Motor neuron (in vitro differentiated cells): ENCODE measurements at regions of chr5 and their contacts with region 1.

Region 1: DNA sequence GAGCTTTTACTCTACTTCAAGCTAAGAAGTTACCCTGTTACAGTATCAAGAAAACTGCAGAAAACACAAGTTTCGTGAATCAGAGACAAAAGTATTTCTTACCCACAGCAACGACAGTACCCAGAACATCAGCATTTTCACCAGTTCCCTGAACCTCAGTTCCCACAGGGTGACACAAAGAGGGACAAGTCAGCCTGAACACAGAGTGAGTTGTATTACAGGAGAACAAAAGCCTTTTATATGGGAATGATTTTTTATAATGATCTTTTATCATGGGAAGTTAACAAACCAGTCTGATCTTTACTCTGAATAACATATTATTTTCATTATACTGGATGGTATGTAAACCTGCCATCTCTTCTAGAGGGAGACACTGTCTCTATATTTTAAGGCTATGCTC is 139.0 kb upstream of the ITGA1 start:
- ATAC-seq: no peak
- H3K4me3 ChIP-seq: no peak overlapping the region
- H3K27ac ChIP-seq: no peak overlapping the region
- H3K4me1 ChIP-seq: no peaks in the 10 kb centered on the region

Region 2: DNA sequence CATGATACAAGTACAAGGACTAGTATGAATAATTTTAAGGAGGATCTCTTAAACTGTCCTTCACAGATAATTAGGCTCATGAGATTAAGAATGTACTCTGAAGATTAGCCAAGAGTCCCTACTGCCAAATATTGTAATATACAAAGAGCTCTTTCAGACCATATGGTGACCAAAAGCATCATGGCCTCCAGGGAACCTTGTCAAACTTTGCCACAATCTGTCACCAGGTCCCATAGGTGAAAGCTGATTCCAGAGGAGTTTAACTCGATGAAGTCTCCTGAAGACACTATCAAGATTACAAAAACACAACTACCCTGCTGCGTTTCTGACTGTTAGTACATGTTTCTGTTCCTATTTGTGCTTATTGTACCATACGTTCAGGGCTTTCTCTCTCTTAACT is 256.4 kb before region 1 on chr5:
- in situ Hi-C with region 1: loop called in 1 of 9 experiments (anchors 25 kb)
- ATAC-seq: peak in 1 of 8 experiments; percentile 64
- H3K4me3 ChIP-seq: no peak overlapping the region
- H3K27ac ChIP-seq: no peak overlapping the region
- H3K4me1 ChIP-seq: peaks cover 0 to 4% of the 10 kb centered on the region in 2 donors

Region 3: DNA sequence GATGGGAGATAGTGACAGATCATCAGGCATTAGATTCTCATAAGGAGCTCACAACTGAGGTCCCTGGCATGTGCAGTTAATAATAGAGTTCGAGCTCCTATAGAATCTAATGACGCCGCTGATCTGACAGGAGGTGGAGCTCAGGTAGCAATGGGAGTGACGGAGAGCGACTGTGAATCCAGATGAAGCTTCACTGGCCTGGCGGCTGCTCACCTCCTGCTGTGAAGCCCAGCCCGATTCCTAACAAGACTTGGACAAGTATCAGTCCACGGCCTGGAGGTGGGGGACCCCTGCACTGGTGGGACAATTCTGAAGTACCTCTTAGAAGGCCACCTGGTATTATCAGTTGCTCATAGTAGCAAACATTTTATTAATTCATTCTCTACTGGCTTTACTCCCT is 238.9 kb before region 1 on chr5:
- in situ Hi-C with region 1: no loop called
- ATAC-seq: no peak
- H3K4me3 ChIP-seq: no peak overlapping the region
- H3K27ac ChIP-seq: no peak overlapping the region
- H3K4me1 ChIP-seq: no peaks in the 10 kb centered on the region

Region 4: DNA sequence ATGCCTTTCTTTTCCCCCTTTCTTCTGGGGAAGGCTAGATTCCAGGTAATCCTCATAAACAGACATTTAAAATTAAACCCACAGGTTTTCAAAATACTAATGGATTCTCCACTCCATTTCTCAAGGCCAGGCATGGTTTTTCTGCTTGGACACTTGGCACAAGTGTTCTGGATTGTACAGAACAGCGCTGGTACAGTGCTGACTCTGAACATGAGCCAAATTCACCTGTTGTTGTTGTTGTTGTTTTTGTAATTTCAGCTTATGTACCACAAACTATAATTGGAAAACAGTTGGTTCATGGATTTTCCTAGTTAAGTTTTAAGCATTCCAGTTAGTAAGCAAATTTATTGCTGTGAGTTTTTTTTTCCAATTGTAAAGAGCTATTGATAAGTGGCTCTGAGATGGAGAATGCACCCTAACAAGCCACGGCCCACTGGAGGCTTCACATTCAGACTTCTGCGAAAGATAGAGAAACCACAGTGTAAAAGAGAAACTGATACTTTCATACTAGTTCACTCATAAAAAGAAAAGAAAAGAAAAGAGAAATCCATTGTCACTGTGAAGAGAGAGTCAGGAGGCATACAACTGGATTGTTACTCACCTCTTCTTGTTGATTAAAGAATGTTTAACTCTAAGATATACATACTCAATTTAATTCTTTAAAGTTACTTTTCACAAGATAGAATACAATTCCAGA is 122.8 kb after region 1 on chr5:
- in situ Hi-C with region 1: no loop called
- ATAC-seq: no peak
- H3K4me3 ChIP-seq: no peak overlapping the region
- H3K27ac ChIP-seq: no peak overlapping the region
- H3K4me1 ChIP-seq: peaks cover 0 to 5% of the 10 kb centered on the region in 2 donors